ENCODE measurements at regions of chr7 and their contacts with region 1.

Region 1: GRCh38 chr7:74068393-74069085 is 15.1 kb upstream of the LIMK1 start:
- DNase-seq: no peak
- ATAC-seq: no peak
- H3K4me3 ChIP-seq: no peak overlapping the region
- H3K4me3 Mint-ChIP-seq: no peak overlapping the region
- H3K27ac ChIP-seq: no peak overlapping the region
- H3K27ac Mint-ChIP-seq: no peak overlapping the region
- H3K4me1 ChIP-seq: no peaks in the 10 kb centered on the region
- H3K4me1 Mint-ChIP-seq: no peaks in the 10 kb centered on the region
- H3K27me3 ChIP-seq: no peaks in the 10 kb centered on the region
- H3K27me3 Mint-ChIP-seq: no peaks in the 10 kb centered on the region
- CTCF ChIP-seq: no peak

Region 2: DNA sequence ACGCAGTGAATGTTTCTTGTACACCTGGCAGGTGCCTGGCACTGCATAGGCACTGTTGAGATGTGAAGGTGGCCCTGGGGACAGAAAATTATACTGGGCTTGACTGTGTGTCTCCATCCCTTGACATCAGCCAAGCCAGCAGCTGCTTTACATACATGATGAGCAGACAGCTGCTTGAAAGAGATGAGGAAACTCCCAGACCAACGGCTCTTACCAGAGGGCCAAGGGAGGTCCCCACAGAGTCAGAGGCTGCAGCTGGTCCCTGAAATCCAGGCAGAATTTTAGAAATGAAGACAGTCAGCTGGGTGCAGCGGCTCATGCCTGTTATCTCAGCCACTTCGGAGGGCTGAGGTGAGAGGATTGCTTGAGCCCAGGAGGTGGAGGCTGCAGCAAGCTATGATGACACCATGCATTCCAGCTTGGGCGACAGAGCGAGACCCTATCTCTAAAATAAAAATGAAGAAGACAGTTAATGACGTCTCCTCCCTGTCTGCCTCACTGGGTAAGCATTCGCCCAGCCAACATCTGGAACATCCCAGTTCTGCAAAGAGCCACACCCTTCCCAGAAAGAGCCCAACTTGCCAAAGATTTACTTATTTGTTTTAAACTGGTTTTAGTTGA is 32.6 kb after region 1 on chr7:
- CTCF ChIA-PET with region 1: no interaction called
- POLR2A ChIA-PET with region 1: no interaction called
- intact Hi-C with region 1: loop called in 1 of 2 experiments (anchors 5 kb)
- DNase-seq: no peak
- ATAC-seq: no peak
- H3K4me3 ChIP-seq: no peak overlapping the region
- H3K4me3 Mint-ChIP-seq: no peak overlapping the region
- H3K27ac ChIP-seq: no peak overlapping the region
- H3K27ac Mint-ChIP-seq: no peak overlapping the region
- H3K4me1 ChIP-seq: no peaks in the 10 kb centered on the region
- H3K4me1 Mint-ChIP-seq: no peaks in the 10 kb centered on the region
- H3K27me3 ChIP-seq: no peaks in the 10 kb centered on the region
- H3K27me3 Mint-ChIP-seq: no peaks in the 10 kb centered on the region
- CTCF ChIP-seq: no peak

Region 3: DNA sequence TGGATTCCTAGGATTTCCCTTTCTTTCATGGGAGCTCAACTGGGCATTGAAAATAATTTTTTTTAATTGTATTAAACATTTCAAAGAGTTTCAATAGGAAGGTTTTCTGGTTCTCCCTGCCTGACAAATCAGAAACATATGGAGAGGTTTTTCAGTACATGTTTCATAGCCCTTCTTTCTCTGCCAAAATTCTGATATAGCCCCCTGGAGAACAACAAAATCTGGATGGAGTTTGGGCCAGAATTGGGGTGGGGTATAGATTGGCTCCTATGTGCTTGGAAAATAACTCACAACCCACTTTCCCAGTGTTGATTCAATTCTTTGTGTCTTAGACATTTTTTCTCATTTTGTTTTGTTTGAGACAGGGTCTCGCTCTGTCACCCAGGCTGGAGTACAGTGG is 81.1 kb after region 1 on chr7:
- CTCF ChIA-PET with region 1: no interaction called
- POLR2A ChIA-PET with region 1: no interaction called
- intact Hi-C with region 1: no loop called
- DNase-seq: no peak
- ATAC-seq: no peak
- H3K4me3 ChIP-seq: no peak overlapping the region
- H3K4me3 Mint-ChIP-seq: no peak overlapping the region
- H3K27ac ChIP-seq: no peak overlapping the region
- H3K27ac Mint-ChIP-seq: no peak overlapping the region
- H3K4me1 ChIP-seq: no peaks in the 10 kb centered on the region
- H3K4me1 Mint-ChIP-seq: no peaks in the 10 kb centered on the region
- H3K27me3 ChIP-seq: no peaks in the 10 kb centered on the region
- H3K27me3 Mint-ChIP-seq: peaks cover 3% of the 10 kb centered on the region
- CTCF ChIP-seq: no peak

Region 4: DNA sequence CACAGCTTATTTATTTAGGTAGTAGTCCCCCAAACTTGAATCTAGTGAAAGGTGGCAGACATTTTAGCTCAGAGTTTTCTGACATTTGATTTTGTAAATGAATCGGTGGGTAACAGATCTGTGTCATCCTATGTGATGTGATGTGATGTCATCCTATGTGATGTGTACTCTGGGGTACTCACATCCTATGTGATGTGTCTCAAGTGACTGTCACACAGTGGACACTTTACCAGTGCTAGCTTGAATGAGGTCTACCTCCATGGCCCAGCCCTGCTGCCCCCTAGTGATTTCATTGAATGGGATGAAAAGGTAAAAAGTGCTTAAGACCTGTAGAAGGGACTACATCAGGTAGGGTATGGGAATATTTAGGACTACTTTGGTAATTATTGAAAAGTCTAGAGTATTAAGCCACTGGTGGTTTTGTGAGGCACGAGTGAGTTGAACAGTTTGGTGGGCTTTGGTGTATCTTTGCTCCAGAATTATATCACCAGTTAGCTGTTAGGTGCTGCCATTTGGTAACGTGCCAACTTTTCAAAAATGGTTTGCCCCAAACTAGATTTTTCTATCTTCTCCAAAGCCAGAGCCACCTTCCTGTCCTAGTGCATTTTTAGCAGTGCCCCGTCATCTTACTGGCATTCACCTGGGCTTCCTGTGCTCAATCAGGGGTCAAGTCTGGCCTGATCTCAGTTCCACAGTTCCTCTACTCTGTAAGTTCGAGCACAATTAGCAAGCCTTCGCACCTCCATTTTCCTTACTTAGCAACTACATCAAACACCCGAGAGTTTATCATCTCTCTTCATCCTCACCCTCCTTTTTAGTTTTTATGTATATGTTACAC is 115.3 kb after region 1 on chr7:
- CTCF ChIA-PET with region 1: interaction called, 16 read pairs
- POLR2A ChIA-PET with region 1: no interaction called
- intact Hi-C with region 1: loop called (anchors 5 kb)
- DNase-seq: peak in 4 of 14 experiments; percentile 26 to 53 (median 36)
- ATAC-seq: peak; percentile 55
- H3K4me3 ChIP-seq: no peak overlapping the region
- H3K4me3 Mint-ChIP-seq: peak overlapping the region; percentile 17
- H3K27ac ChIP-seq: no peak overlapping the region
- H3K27ac Mint-ChIP-seq: peak overlapping the region; percentile 51
- H3K4me1 ChIP-seq: peaks cover 75% of the 10 kb centered on the region
- H3K4me1 Mint-ChIP-seq: peaks cover 93% of the 10 kb centered on the region
- H3K27me3 ChIP-seq: no peaks in the 10 kb centered on the region
- H3K27me3 Mint-ChIP-seq: no peaks in the 10 kb centered on the region
- CTCF ChIP-seq: no peak

Region 5: DNA sequence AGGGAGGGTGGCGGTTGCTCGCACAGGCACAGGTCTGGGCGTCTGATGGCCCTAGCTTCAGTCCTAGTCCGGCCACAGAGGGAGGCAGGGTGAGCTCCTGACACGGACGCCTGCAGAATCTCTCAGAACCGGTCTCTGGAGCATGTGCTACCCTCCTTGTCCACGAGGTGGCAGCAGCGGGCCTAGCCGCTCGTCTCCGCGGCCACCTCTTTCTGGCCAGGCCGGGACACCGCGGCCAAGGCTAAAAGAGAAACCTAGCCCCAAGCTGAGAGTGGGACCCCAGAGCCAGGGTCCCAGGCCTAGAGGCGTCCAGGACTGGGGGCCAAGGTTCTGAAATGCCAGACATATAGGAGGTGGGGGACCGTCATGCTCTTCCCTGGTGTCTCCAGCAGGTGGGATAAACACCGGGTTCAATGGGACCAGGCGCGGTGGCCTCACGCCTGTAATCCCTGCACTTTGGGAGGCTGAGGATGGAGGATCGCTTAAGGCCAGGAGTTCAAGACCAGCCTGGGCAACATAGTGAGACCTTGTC is 138.1 kb after region 1 on chr7:
- CTCF ChIA-PET with region 1: interaction called, 4 read pairs
- POLR2A ChIA-PET with region 1: no interaction called
- intact Hi-C with region 1: loop called in 1 of 2 experiments (anchors 2 kb)
- DNase-seq: peak; percentile 61 to 87 (median 74)
- ATAC-seq: peak; percentile 77
- H3K4me3 ChIP-seq: peak overlapping the region; percentile 30
- H3K4me3 Mint-ChIP-seq: no peak overlapping the region
- H3K27ac ChIP-seq: no peak overlapping the region
- H3K27ac Mint-ChIP-seq: no peak overlapping the region
- H3K4me1 ChIP-seq: peaks cover 34% of the 10 kb centered on the region
- H3K4me1 Mint-ChIP-seq: peaks cover 13% of the 10 kb centered on the region
- H3K27me3 ChIP-seq: no peaks in the 10 kb centered on the region
- H3K27me3 Mint-ChIP-seq: peaks cover 5% of the 10 kb centered on the region
- CTCF ChIP-seq: peak; percentile 96

Region 6: DNA sequence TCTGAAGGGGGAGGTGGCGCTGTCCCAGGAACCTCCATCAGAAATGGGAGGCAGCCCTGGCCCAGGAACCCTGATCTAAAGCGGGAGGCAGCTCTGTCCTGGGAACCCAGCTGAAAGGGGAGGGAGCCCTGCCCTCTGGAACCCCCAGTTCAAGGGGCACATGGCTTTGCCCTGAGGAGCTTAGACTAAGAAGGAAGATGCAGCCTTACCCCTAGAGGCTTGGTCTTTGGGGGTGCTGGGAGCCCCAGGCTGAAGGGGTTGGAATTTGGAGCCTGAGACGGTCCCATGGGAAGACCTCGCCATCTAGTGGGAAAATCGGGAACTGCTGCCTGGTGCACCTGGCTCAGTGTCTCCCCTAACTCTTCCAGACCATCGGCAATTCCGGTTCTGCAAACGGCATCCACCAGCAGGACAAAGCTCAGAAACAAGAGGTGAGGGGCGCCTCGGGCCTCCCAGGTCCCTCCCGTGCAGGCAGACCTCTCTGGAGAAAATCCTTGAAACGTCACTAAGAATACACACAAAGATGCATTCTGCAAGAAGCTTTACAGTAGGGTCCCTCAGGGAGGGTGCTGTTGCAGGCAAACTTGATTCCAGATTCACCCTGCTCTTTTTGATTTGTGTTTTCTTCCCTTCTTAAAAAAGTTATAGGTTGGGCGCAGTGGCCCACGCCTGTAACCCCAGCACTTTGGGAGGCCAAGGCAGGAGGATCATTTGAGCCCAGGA is 332.8 kb after region 1 on chr7:
- CTCF ChIA-PET with region 1: interaction called, 3 read pairs
- POLR2A ChIA-PET with region 1: no interaction called
- intact Hi-C with region 1: loop called (anchors 1 kb)
- DNase-seq: peak; percentile 56 to 83 (median 66)
- ATAC-seq: peak; percentile 56
- H3K4me3 ChIP-seq: no peak overlapping the region
- H3K4me3 Mint-ChIP-seq: no peak overlapping the region
- H3K27ac ChIP-seq: no peak overlapping the region
- H3K27ac Mint-ChIP-seq: no peak overlapping the region
- H3K4me1 ChIP-seq: peaks cover 4% of the 10 kb centered on the region
- H3K4me1 Mint-ChIP-seq: no peaks in the 10 kb centered on the region
- H3K27me3 ChIP-seq: no peaks in the 10 kb centered on the region
- H3K27me3 Mint-ChIP-seq: no peaks in the 10 kb centered on the region
- CTCF ChIP-seq: peak; percentile 92

Measured in CD4-positive, alpha-beta T cell (primary cell).